ENCODE measurements at regions of chr2 and their contacts with region 1.

Region 1: GRCh38 chr2:218395797-218396687 is 3.6 kb upstream of the CTDSP1 start:
- DNase-seq: peak; percentile 98 to 99 (median 99)
- H3K4me3 ChIP-seq: peak overlapping the region; percentile 46 to 88 (median 85)
- H3K27ac ChIP-seq: peak overlapping the region; percentile 90 to 94
- H3K4me1 ChIP-seq: peaks cover 2 to 65% (median 60%) of the 10 kb centered on the region in 4 experiments
- H3K27me3 ChIP-seq: no peaks in the 10 kb centered on the region

Region 2: DNA sequence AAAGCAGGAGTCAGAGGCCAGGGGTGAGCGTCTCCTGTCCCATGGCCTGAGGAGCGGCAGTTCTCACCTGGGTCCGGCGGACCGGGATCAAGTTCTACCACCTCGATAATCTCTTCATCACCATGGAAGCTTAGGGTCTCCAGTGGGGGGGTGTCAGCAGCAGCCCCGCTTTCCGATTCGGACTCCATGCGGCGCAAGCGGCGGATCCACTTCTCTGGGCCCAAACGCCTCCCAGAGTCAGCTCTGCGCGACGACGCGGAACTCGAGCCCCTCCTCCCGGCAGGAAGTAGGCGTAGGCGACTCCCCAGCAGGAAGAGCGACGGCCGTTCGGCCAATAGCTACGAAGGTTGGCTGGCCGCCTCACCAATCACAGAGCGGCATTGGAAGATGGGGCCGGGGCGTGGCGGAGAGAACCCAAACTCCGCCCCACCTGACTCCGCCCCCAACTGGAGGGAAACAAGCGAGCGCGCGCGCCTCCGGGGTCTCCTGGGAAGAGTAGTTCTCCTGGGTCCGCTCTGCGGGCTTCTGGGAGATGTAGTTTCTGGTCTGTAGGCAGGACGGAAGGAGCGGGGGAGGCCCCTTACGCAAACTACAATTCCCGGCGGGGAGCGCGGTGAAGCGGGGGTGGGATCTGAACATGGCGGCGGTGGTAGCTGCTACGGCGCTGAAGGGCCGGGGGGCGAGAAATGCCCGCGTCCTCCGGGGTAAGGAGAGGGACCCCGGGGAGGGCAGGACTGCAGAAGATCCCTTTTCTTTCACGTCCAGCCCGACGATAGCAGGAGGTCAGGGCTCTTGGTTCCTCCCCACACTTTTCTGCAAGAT is 125.9 kb before region 1 on chr2 and contains the starts of genes AAMP and PNKD:
- CTCF ChIA-PET with region 1: interaction called, 70 read pairs
- POLR2A ChIA-PET with region 1: interaction called, 3 read pairs
- DNase-seq: peak; percentile 99 to 100 (median 99)
- H3K4me3 ChIP-seq: peak within 1 kb of the TSS; percentile 71 to 98 (median 95)
- H3K27ac ChIP-seq: peak within 1 kb of the TSS; percentile 83 to 88
- H3K4me1 ChIP-seq: peaks cover 5 to 36% (median 26%) of the 10 kb centered on the region in 4 experiments
- H3K27me3 ChIP-seq: no peaks in the 10 kb centered on the region

Region 3: DNA sequence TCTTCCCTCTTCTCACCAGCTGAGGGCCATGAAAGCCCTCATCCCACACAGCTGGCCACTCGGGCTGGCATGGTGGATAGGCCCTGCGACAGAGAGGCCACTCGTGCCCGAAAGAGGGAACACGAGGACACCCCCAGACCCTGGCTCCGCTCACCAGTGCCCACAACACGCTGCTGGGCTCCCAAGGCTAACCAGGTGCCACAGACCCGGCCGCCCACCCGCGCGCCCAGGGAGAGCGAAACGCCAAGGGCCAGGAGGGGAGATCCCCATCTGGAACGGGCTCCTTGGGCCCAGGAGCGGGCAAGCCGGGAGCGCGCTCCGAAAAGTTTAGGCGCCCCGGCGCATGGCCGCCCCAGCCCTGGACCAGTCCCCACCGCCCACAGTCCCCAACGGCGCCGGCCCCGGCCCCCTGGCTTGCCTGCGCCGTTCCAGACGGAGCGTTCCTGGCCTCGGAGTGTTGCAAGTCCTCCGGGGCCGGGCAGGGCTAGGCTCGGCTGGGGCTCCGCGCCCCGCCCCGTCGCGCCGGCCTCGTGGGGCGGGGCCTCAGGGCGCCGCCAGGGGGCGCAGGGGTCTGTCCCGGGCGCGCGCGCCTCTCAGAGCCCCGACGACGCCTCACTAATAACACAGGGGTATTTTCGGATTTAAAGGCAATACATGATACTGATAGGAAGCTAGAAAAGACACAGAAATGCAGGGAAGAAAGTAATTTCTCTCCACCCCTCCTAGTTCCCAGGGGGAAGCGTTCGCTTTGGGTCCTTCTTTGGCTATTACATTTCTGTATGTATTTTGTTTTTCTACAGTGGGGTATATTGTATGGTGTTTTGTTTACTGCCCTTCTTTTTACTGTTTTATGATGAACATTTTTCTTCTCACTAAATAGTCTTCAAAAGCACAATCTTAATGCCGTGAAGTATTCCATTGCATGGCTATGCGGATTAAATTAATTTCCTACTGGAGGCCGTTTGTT is 103.7 kb before region 1 on chr2 and contains the start of gene TMBIM1:
- CTCF ChIA-PET with region 1: interaction called, 64 read pairs
- POLR2A ChIA-PET with region 1: interaction called, 29 read pairs
- DNase-seq: peak; percentile 61 to 82 (median 82)
- H3K4me3 ChIP-seq: peak within 1 kb of the TSS; percentile 62 to 93 (median 80)
- H3K27ac ChIP-seq: peak within 1 kb of the TSS; percentile 66 to 90
- H3K4me1 ChIP-seq: peaks cover 15 to 67% (median 59%) of the 10 kb centered on the region in 4 experiments
- H3K27me3 ChIP-seq: no peaks in the 10 kb centered on the region

Region 4: DNA sequence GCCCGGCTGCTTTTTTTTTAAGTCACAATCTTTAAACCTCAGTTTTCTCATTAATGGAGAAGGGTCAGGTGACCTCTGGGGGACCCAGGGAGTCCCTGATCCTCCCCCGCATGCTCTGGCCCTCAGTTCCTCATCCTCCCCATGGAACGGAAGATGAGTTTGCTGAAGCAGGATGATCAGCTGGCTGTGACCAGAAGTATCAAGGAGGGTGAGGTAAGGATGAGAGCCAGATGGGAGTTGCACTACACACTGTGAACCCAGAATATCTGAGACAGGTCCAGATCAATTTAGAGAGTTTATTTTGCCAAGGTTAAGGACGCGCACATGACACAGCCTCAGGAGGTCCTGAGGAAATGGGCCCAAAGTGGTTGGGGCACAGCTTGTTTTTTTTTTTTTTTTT is 35.6 kb before region 1 on chr2:
- CTCF ChIA-PET with region 1: interaction called, 37 read pairs
- POLR2A ChIA-PET with region 1: interaction called, 4 read pairs
- DNase-seq: peak in 2 of 3 donors; percentile 43 to 44
- H3K4me3 ChIP-seq: no peak overlapping the region
- H3K27ac ChIP-seq: no peak overlapping the region
- H3K4me1 ChIP-seq: peaks cover 0 to 17% (median 6%) of the 10 kb centered on the region in 4 experiments
- H3K27me3 ChIP-seq: no peaks in the 10 kb centered on the region

Region 5: GRCh38 chr2:218381916-218382366 is 14.1 kb before region 1 on chr2 and contains the start of gene SLC11A1:
- CTCF ChIA-PET with region 1: interaction called, 17 read pairs
- POLR2A ChIA-PET with region 1: no interaction called
- DNase-seq: no peak
- H3K4me3 ChIP-seq: peak within 1 kb of the TSS in 1 of 7 experiments; percentile 51
- H3K27ac ChIP-seq: no peak within 1 kb of the TSS
- H3K4me1 ChIP-seq: peaks cover 0 to 4% (median 1%) of the 10 kb centered on the region in 4 experiments
- H3K27me3 ChIP-seq: no peaks in the 10 kb centered on the region

Measured in common myeloid progenitor, CD34-positive (primary cell).